Activated CD4-positive, alpha-beta memory T cell treated with anti-CD3 and anti-CD28 coated beads, Interleukin-2, amount 10 ng/mL, durations not matched to agents 7 days and 5 days (primary cell): ENCODE measurements at regions of chr1 and their contacts with region 1.

Region 1: GRCh38 chr1:28259307-28260167 is at the start of gene SESN2:
- DNase-seq: peak; percentile 100
- H3K4me3 Mint-ChIP-seq: peak within 1 kb of the TSS; percentile 71
- H3K27ac Mint-ChIP-seq: peak within 1 kb of the TSS; percentile 83
- H3K4me1 Mint-ChIP-seq: peaks cover 53% of the 10 kb centered on the region
- H3K27me3 Mint-ChIP-seq: no peaks in the 10 kb centered on the region
- total RNA-seq, gene SESN2: 22.8 to 23.9 TPM

Region 2: GRCh38 chr1:28235755-28236655 is 23.5 kb before region 1 on chr1 and contains the start of gene ATP5IF1:
- CTCF ChIA-PET with region 1: no interaction called
- POLR2A ChIA-PET with region 1: interaction called, 27 read pairs
- DNase-seq: peak; percentile 96
- H3K4me3 Mint-ChIP-seq: no peak within 1 kb of the TSS
- H3K27ac Mint-ChIP-seq: no peak within 1 kb of the TSS
- H3K4me1 Mint-ChIP-seq: peaks cover 25% of the 10 kb centered on the region
- H3K27me3 Mint-ChIP-seq: no peaks in the 10 kb centered on the region
- total RNA-seq, gene ATP5IF1: 178 TPM

Region 3: DNA sequence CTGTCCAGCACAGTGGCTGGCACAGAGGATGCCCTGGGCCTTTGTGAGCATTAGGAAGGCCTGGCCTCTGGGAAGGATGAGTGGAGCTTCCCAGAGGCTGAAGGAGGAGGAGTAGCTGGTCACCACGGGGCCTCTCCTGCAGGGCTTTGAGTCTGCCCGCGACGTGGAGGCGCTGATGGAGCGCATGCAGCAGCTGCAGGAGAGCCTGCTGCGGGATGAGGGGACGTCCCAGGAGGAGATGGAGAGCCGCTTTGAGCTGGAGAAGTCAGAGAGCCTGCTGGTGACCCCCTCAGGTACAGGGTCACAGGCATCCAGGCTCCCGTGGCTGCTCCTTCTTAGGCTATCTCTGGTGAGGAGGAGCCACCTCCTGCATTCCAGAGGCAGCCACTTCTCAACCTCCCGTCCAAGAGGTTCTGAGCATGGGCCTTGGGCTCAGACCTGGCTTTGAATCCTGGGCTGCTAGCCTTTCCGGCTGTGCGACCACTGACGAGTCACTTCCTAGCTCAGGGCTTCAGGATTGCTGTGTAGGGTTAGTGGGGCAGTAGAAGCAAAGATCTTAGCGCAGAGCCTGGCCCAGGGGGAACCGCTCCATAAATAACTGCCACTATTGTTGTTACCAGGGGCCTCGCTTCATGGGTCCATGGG is 13.8 kb after region 1 on chr1:
- CTCF ChIA-PET with region 1: no interaction called
- POLR2A ChIA-PET with region 1: interaction called, 10 read pairs
- DNase-seq: no peak
- H3K4me3 Mint-ChIP-seq: no peak overlapping the region
- H3K27ac Mint-ChIP-seq: no peak overlapping the region
- H3K4me1 Mint-ChIP-seq: no peaks in the 10 kb centered on the region
- H3K27me3 Mint-ChIP-seq: no peaks in the 10 kb centered on the region